ENCODE measurements at regions of chr16 and their contacts with region 1.

Region 1: DNA sequence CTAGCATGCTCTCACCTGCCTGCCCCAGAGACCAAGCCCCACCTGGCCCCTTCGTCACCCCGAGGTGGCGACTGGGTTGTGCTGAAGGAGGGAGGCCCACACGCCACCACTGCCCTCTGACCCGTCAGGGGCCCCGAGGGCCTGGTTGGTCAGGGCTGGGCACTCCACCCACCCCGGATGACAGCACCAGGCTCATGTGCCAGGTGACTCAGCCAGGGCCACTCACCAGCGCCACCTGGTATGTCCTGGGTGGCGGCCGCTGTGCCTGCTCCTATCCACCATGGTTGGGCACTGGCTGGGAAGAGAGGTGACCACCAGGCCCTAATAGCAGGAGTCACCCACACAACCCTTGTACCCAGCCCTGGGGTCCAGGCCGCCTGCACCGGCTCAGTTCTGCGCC is 68.9 kb downstream of the JPH3 start:
- DNase-seq: no peak
- H3K4me3 ChIP-seq: no peak overlapping the region
- H3K27ac ChIP-seq: no peak overlapping the region
- H3K4me1 ChIP-seq: no peaks in the 10 kb centered on the region
- H3K27me3 ChIP-seq: no peaks in the 10 kb centered on the region
- CTCF ChIP-seq: no peak

Region 2: DNA sequence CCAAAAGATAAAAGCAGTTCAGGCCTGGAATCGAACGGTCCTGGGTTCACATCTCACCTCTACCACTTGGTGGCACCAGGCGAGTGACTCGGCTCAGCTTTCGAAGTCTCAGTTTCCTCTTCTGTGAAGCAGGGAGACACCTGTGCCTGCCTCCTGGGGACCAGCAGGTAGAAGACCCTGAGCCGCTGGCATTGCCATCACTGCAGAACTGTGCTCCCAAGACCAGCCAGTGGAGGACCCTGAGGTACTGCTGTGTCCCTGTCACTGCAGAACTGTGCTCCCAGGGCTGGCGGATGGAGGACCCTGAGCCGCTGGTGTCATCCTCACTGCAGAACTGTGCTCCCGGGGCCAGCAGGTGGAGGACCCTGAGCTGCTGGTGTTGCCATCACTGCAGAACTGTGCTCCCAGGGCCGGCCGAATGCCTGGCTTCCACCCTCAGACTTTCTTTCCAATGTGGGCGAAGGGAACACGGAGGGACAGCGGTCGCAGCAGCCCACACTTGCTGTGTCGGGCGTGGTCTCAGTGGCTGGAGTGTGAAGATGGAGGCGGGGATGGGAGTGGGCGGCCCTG is 206.8 kb after region 1 on chr16:
- CTCF ChIA-PET with region 1: no interaction called
- POLR2A ChIA-PET with region 1: no interaction called
- intact Hi-C with region 1: no loop called
- DNase-seq: no peak
- H3K4me3 ChIP-seq: no peak overlapping the region
- H3K27ac ChIP-seq: no peak overlapping the region
- H3K4me1 ChIP-seq: peaks cover 10% of the 10 kb centered on the region
- H3K27me3 ChIP-seq: no peaks in the 10 kb centered on the region
- CTCF ChIP-seq: 0 out of 2 replicates have a peak, but pooled peaks have one; percentile 29

Region 3: DNA sequence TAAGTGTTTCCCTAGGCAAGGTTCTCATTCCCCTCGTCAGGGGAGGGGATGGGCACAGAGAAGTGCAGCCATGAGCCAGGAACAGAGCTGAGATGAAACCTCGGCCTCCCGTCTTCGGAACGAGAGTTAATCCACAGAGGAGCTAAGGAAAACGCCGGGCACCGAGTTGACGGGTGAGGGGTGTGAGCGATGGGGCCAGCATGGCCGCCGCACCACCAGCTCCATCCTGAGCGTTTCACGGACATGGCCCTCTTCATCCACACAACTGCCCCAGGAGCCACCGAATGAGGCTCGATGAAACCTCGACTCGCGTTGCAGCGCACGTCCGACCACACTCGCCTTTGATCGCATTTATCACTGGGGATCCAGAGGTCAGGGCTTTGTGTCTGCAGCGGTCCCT is 243.6 kb after region 1 on chr16:
- CTCF ChIA-PET with region 1: interaction called, 11 read pairs
- POLR2A ChIA-PET with region 1: no interaction called
- intact Hi-C with region 1: no loop called
- DNase-seq: no peak
- H3K4me3 ChIP-seq: no peak overlapping the region
- H3K27ac ChIP-seq: no peak overlapping the region
- H3K4me1 ChIP-seq: no peaks in the 10 kb centered on the region
- H3K27me3 ChIP-seq: no peaks in the 10 kb centered on the region
- CTCF ChIP-seq: no peak

Measured in A673 (cell line).